ENCODE measurements at regions of chr19 and their contacts with region 1.

Region 1: GRCh38 chr19:58097781-58098681 is at the start of gene ZSCAN18:
- DNase-seq: peak; percentile 96
- H3K4me3 ChIP-seq: peak within 1 kb of the TSS; percentile 62 to 99 (median 92)
- H3K27ac ChIP-seq: peak within 1 kb of the TSS; percentile 82 to 97 (median 92)
- H3K4me1 ChIP-seq: peaks cover 0 to 16% (median 7%) of the 10 kb centered on the region in 4 donors
- H3K27me3 ChIP-seq: no peaks in the 10 kb centered on the region
- CTCF ChIP-seq: no peak
- EP300 ChIP-seq: peak; percentile 70
- POLR2A ChIP-seq: peak; percentile 67
- total RNA-seq, gene ZSCAN18: 30.4 to 50.0 (median 42.8) TPM

Region 2: DNA sequence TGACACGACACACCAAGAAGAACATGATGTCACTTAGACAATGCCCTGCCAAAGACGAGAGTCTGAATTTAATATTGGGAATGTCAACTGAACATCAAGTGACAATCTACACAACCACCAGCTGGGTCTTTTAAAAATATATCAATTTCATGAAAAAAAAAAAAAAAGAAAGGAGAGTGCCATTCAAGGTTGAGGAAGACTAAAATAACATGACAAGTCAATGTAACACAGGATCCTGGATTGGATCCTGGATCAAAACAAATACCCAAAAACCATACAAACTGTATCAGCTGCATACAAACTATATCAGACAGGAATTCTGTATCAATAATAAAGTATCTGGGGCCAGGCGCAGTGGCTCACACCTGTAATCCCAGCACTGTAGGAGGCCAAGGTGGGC is 47.8 kb after region 1 on chr19:
- in situ Hi-C with region 1: no loop called
- intact Hi-C with region 1: loop called (anchors 2 kb)
- DNase-seq: no peak
- H3K4me3 ChIP-seq: no peak overlapping the region
- H3K27ac ChIP-seq: no peak overlapping the region
- H3K4me1 ChIP-seq: peaks cover 0 to 13% (median 6%) of the 10 kb centered on the region in 4 donors
- H3K27me3 ChIP-seq: no peaks in the 10 kb centered on the region
- CTCF ChIP-seq: no peak
- EP300 ChIP-seq: no peak
- POLR2A ChIP-seq: no peak